ENCODE measurements at regions of chr5 and their contacts with region 1.

Region 1: GRCh38 chr5:175657593-175658271 is at the start of gene HRH2:
- DNase-seq: peak; percentile 72
- H3K4me3 Mint-ChIP-seq: peak within 1 kb of the TSS; percentile 87
- H3K27ac Mint-ChIP-seq: peak within 1 kb of the TSS; percentile 75
- H3K4me1 Mint-ChIP-seq: peaks cover 77% of the 10 kb centered on the region
- H3K27me3 Mint-ChIP-seq: no peaks in the 10 kb centered on the region
- total RNA-seq, gene HRH2: 11.6 to 11.8 TPM

Region 2: DNA sequence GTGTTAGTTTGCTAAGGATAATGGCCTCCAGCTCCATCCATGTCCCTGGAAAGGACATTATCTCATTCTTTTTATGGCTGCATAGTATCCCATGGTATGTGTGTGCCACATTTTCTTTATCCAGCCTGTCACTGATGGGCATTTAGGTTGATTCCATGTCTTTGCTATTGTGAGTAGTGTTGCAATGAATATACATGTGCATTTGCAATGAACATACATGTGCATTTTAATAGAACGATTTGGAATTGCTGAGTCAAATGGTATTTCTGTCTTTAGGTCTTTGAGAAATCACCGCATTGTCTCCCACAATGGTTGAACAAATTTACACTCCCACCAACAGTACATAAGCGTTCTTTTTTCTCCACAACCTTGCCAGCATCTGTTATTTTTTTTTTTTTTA is 251.4 kb before region 1 on chr5:
- CTCF ChIA-PET with region 1: no interaction called
- POLR2A ChIA-PET with region 1: no interaction called
- intact Hi-C with region 1: no loop called
- DNase-seq: no peak
- H3K4me3 Mint-ChIP-seq: no peak overlapping the region
- H3K27ac Mint-ChIP-seq: no peak overlapping the region
- H3K4me1 Mint-ChIP-seq: no peaks in the 10 kb centered on the region
- H3K27me3 Mint-ChIP-seq: peaks cover 1% of the 10 kb centered on the region

Region 3: DNA sequence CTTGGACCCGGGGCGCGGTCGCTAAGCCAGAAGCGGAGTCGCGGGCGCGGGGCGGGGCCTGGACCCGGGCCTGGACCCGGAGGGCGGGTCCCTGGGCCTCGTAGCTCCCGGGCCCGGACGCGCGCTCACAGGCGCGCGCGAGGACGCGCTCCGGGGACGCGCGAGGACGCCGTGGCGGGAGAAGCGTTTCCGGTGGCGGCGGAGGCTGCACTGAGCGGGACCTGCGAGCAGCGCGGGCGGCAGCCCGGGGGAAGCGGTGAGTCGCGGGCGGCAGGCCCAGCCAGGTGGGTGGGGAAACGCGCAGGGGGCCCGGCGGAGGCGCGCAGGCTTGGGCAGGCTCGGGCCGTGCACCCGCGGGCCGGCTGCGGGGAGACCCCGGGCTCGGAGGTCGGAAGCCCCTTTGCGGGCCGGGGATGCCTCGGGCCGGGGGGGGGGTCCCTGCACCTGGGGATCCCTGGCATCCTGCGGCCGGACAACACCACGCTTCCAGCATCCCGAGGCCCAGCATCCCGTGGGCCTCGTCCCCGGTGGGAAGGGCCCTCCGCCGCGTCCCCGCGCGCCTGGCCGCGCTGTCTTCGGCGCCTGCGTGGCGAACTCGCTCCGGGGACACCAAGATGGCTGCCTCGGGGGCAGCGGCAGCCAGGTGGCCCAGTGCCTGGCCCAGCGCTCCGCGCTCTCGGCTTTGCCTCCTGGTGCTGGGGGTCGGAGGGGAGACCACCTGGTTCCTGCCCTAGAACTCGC is 179.2 kb before region 1 on chr5 and contains the start of gene SFXN1:
- CTCF ChIA-PET with region 1: no interaction called
- POLR2A ChIA-PET with region 1: no interaction called
- intact Hi-C with region 1: loop called (anchors 1 kb)
- DNase-seq: peak; percentile 90
- H3K4me3 Mint-ChIP-seq: peak within 1 kb of the TSS; percentile 96
- H3K27ac Mint-ChIP-seq: peak within 1 kb of the TSS; percentile 96
- H3K4me1 Mint-ChIP-seq: peaks cover 46% of the 10 kb centered on the region
- H3K27me3 Mint-ChIP-seq: no peaks in the 10 kb centered on the region
- total RNA-seq, gene SFXN1: 298 to 300 TPM

Region 4: DNA sequence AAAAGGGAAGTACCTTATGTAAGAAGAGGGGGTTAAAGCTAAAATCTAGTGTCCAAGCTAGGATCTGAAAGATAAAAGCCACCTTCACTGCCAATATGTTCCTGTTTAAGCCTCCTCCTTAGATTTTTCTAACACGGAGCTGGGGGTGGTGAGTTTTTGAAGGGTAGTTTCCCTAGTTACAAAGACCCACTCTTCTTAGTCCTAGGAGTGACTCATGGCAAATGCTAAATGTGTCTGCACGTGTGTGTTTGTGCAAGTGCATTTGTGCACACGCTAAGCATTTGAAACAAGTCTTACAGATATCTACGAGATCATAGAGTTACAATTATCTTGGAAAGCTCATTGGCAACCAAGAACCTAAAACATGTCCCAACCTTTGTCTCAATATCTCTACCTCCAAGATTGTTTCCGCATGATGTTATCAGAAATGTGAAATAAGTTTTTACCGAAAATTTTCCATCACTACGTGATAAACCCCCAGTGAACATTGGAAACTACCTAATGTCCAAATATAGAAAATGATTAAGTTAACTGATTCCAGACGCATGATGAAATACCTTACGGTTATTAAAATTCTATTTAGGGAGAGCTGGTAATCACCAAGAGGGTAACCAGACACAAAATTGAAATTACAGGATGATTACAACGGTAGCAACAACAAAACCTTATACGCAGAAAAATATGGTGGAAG is 77.8 kb before region 1 on chr5:
- CTCF ChIA-PET with region 1: no interaction called
- POLR2A ChIA-PET with region 1: no interaction called
- intact Hi-C with region 1: loop called (anchors 2 kb)
- DNase-seq: no peak
- H3K4me3 Mint-ChIP-seq: no peak overlapping the region
- H3K27ac Mint-ChIP-seq: peak overlapping the region; percentile 14
- H3K4me1 Mint-ChIP-seq: peaks cover 8% of the 10 kb centered on the region
- H3K27me3 Mint-ChIP-seq: no peaks in the 10 kb centered on the region

Region 5: DNA sequence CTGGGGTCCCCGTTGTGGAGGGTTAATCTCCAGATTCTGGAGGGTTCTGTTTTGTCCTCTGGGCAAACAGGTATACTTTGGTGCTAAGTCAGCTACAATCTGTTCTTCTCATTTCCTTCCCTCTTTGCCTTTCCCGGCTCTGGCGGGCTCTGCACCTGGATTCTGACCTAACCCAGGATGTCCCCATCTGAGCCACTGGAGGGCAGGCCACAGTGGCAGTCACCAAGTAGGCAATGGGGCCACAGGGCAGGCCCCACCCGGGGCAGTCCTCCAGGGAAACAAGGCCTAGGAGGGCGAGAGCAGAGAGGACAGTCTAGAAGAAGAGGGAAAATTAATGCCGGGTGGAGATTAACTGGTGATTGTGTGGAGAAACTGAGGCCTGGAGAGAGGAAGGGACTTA is 40.3 kb before region 1 on chr5:
- CTCF ChIA-PET with region 1: interaction called, 3 read pairs
- POLR2A ChIA-PET with region 1: no interaction called
- intact Hi-C with region 1: loop called (anchors 2 kb)
- DNase-seq: no peak
- H3K4me3 Mint-ChIP-seq: no peak overlapping the region
- H3K27ac Mint-ChIP-seq: no peak overlapping the region
- H3K4me1 Mint-ChIP-seq: peaks cover 11% of the 10 kb centered on the region
- H3K27me3 Mint-ChIP-seq: no peaks in the 10 kb centered on the region

Region 6: GRCh38 chr5:175642998-175643397 is 14.7 kb before region 1 on chr5:
- CTCF ChIA-PET with region 1: no interaction called
- POLR2A ChIA-PET with region 1: no interaction called
- intact Hi-C with region 1: no loop called
- DNase-seq: peak; percentile 37
- H3K4me3 Mint-ChIP-seq: no peak overlapping the region
- H3K27ac Mint-ChIP-seq: no peak overlapping the region
- H3K4me1 Mint-ChIP-seq: peaks cover 18% of the 10 kb centered on the region
- H3K27me3 Mint-ChIP-seq: no peaks in the 10 kb centered on the region

Region 7: DNA sequence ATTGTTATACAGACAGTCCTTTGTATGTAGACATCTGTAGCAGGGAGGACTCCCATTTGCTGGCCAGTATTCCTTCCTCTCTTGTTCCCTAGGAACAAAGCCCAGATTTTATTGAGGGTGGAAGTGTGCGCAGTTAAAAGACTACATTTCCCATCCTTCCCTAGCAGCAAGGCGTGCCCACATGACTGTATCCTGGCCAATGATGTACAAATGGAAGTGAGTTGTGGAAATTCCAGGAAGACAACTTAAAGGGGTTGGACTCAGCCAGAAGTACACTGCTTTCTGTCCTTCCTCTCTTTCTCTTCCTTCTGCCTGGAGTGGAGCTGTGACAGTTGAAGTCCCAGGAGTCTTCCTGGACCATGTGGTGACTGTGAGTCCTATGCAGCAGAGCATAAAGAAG is 89.1 kb after region 1 on chr5:
- CTCF ChIA-PET with region 1: no interaction called
- POLR2A ChIA-PET with region 1: no interaction called
- intact Hi-C with region 1: no loop called
- DNase-seq: no peak
- H3K4me3 Mint-ChIP-seq: no peak overlapping the region
- H3K27ac Mint-ChIP-seq: no peak overlapping the region
- H3K4me1 Mint-ChIP-seq: no peaks in the 10 kb centered on the region
- H3K27me3 Mint-ChIP-seq: peaks cover 24% of the 10 kb centered on the region

Region 8: GRCh38 chr5:175821790-175822211 is 164.1 kb after region 1 on chr5:
- CTCF ChIA-PET with region 1: no interaction called
- POLR2A ChIA-PET with region 1: no interaction called
- intact Hi-C with region 1: loop called (anchors 2 kb)
- DNase-seq: peak; percentile 57
- H3K4me3 Mint-ChIP-seq: peak overlapping the region; percentile 42
- H3K27ac Mint-ChIP-seq: peak overlapping the region; percentile 88
- H3K4me1 Mint-ChIP-seq: peaks cover 21% of the 10 kb centered on the region
- H3K27me3 Mint-ChIP-seq: peaks cover 19% of the 10 kb centered on the region

Region 9: GRCh38 chr5:176447982-176448608 is 790.4 kb after region 1 on chr5 and contains the start of gene FAF2:
- CTCF ChIA-PET with region 1: no interaction called
- POLR2A ChIA-PET with region 1: no interaction called
- intact Hi-C with region 1: loop called (anchors 5 kb)
- DNase-seq: peak; percentile 99
- H3K4me3 Mint-ChIP-seq: peak within 1 kb of the TSS; percentile 97
- H3K27ac Mint-ChIP-seq: peak within 1 kb of the TSS; percentile 98
- H3K4me1 Mint-ChIP-seq: peaks cover 25% of the 10 kb centered on the region
- H3K27me3 Mint-ChIP-seq: no peaks in the 10 kb centered on the region
- total RNA-seq, gene FAF2: 34.4 to 34.6 TPM

Measured in activated CD4-positive, alpha-beta memory T cell treated with anti-CD3 and anti-CD28 coated beads for 36 hours (primary cell).